ENCODE measurements at regions of chr16 and their contacts with region 1.

Region 1: DNA sequence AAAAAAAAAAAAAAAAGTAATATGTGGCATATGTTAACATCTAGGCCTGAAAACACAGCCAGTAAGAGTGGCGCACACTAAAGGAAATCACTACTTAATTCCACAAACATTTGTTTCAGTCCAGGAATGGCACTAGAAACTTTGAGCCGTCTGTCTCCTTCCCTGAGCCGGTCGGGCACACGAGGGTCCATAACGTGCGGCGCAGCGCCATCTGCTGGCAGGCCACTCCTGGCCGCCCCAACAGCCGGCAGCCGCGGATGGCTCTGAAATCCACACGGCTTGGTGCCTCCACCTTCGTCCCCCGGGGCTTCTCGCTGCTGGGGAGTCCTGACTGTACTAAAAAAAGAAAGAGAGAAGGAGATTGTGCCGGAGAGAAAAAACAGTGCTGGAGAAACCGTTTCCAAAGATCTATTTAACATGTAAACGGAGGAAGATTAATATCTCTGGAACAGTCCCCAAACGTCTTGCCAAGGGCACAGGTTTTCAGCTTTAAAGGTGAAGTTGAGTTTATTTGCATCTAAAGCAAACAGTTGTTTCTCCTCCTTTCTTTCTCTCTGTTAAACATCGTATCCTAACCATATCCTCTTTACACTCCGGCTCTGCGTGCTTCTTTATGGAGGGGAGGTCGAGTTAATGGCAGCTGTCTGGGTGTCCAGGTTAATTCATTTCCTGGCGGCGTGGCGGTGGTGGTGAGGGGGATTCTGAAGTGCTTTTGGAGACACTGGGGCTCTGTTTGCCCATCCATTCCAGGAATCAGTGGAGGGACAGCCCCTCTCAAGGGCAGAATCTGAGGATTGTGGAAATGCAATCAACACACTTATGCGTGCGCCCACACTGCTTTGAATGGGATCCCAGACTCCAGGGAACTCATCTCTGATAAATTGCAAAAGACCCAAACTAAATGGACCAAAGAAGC is 611.3 kb upstream of the SALL1 start:
- DNase-seq: peak; percentile 49
- H3K4me3 ChIP-seq: no peak overlapping the region
- H3K27ac ChIP-seq: no peak overlapping the region
- H3K4me1 ChIP-seq: no peaks in the 10 kb centered on the region
- H3K27me3 ChIP-seq: peaks cover 2% of the 10 kb centered on the region
- CTCF ChIP-seq: peak; percentile 80 to 94

Region 2: DNA sequence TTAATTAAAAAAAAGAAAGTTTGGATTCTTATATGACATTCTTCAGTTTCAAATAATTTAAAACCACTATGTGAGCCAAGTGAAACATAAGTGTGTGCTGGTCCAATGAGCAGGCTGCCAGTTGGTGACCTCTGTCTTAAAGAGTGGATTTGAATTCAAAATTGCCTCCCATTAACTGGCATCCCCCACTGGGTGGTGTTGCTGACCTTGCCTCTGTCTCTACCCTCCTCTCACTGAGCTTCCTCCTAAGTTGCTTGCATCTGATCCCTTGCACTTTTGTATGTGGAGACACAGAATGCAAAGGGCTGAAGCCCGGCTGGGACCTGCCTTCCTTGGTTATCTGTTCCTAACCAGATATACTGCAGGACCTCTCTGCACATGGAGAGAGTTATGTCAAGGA is 859.9 kb before region 1 on chr16:
- CTCF ChIA-PET with region 1: no interaction called
- dilution Hi-C with region 1: no loop called
- in situ Hi-C with region 1: no loop called
- intact Hi-C with region 1: loop called (anchors 1 kb)
- DNase-seq: no peak
- H3K4me3 ChIP-seq: no peak overlapping the region
- H3K27ac ChIP-seq: no peak overlapping the region
- H3K4me1 ChIP-seq: no peaks in the 10 kb centered on the region
- H3K27me3 ChIP-seq: no peaks in the 10 kb centered on the region
- CTCF ChIP-seq: peak in 1 of 2 donors; percentile 36

Region 3: DNA sequence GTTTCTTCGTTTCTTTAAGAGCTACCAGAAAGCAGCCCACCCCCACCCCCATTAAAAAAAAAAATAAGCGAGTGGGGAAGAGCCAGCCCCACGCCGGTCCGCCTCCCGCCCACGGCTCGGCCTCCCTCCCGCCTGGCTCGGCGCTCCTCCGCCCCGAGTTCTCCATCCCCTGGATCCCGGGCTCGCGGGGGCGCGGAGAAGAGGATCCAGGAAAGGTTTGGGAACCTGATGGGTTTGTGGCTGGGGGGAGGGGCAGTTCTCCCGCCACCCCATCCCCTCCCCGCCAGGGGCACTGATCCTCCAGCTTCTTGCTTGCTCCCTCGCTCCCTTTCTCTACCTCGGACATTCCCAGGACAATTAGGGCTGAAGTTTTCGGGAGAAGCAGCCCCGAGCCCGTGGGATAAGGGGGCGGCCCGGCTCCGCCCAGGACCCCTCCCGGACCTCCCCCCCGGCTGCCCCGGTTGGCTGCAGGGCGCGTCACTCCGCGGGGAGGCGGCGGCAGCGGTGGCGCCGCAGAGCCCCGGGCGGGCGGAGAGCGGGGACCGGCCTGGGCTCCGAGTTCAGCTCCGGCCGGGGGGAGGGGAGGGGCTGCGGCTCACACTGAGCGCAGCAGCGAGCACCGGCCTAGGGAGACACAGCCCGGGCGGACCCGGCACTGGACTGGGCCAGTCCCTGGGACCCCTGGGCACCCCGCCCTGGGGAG is 610.2 kb before region 1 on chr16:
- CTCF ChIA-PET with region 1: no interaction called
- dilution Hi-C with region 1: no loop called
- in situ Hi-C with region 1: no loop called
- intact Hi-C with region 1: loop called (anchors 2 kb)
- DNase-seq: no peak
- H3K4me3 ChIP-seq: peak overlapping the region; percentile 23 to 43 (median 41)
- H3K27ac ChIP-seq: no peak overlapping the region
- H3K4me1 ChIP-seq: peaks cover 23% of the 10 kb centered on the region
- H3K27me3 ChIP-seq: peaks cover 62% of the 10 kb centered on the region
- CTCF ChIP-seq: no peak

Region 4: DNA sequence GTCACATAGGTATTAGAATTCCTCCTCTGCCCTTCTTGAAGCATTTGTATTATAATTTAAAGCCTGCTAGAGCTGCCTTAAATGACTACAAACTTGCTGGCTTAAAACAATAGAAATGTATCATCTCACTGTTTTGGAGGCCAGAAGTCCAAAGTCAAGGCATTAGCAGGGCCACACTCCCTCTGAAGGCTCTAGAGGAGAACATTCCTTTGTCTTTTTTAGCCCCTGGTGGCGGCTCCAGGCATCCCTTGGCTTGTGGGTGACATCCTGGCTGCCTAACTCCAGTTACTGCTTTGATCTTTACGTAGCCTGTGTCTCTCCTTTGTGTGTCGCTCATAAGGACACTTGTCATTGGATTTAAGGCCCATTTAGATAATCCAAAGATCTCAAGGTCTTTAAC is 424.7 kb before region 1 on chr16:
- CTCF ChIA-PET with region 1: no interaction called
- dilution Hi-C with region 1: no loop called
- in situ Hi-C with region 1: no loop called
- intact Hi-C with region 1: loop called (anchors 5 kb)
- DNase-seq: no peak
- H3K4me3 ChIP-seq: no peak overlapping the region
- H3K27ac ChIP-seq: no peak overlapping the region
- H3K4me1 ChIP-seq: no peaks in the 10 kb centered on the region
- H3K27me3 ChIP-seq: no peaks in the 10 kb centered on the region
- CTCF ChIP-seq: peak; percentile 9 to 21

Region 5: GRCh38 chr16:51707666-51708065 is 54.7 kb before region 1 on chr16:
- CTCF ChIA-PET with region 1: no interaction called
- dilution Hi-C with region 1: no loop called
- in situ Hi-C with region 1: no loop called
- intact Hi-C with region 1: no loop called
- DNase-seq: no peak
- H3K4me3 ChIP-seq: no peak overlapping the region
- H3K27ac ChIP-seq: no peak overlapping the region
- H3K4me1 ChIP-seq: no peaks in the 10 kb centered on the region
- H3K27me3 ChIP-seq: no peaks in the 10 kb centered on the region
- CTCF ChIP-seq: no peak

Region 6: GRCh38 chr16:51982715-51983680 is 220.7 kb after region 1 on chr16:
- CTCF ChIA-PET with region 1: no interaction called
- dilution Hi-C with region 1: no loop called
- in situ Hi-C with region 1: no loop called
- intact Hi-C with region 1: loop called (anchors 2 kb)
- DNase-seq: peak; percentile 42
- H3K4me3 ChIP-seq: no peak overlapping the region
- H3K27ac ChIP-seq: no peak overlapping the region
- H3K4me1 ChIP-seq: no peaks in the 10 kb centered on the region
- H3K27me3 ChIP-seq: peaks cover 4% of the 10 kb centered on the region
- CTCF ChIP-seq: peak; percentile 69 to 79

Measured in mammary epithelial cell (primary cell).